ENCODE measurements at regions of chr14 and their contacts with region 1.

Region 1: GRCh38 chr14:106605548-106606448 is 1079.4 kb downstream of the TMEM121 start:
- H3K4me3 ChIP-seq: no peak overlapping the region
- H3K27ac ChIP-seq: no peak overlapping the region
- H3K4me1 ChIP-seq: no peaks in the 10 kb centered on the region
- CTCF ChIP-seq: no peak

Region 2: GRCh38 chr14:105690692-105691091 is 915.1 kb before region 1 on chr14:
- CTCF ChIA-PET with region 1: no interaction called
- POLR2A ChIA-PET with region 1: no interaction called
- H3K4me3 ChIP-seq: no peak overlapping the region
- H3K27ac ChIP-seq: no peak overlapping the region
- H3K4me1 ChIP-seq: no peaks in the 10 kb centered on the region
- CTCF ChIP-seq: no peak

Region 3: GRCh38 chr14:106622200-106622745 is 16.5 kb after region 1 on chr14:
- CTCF ChIA-PET with region 1: interaction called, 23 read pairs
- POLR2A ChIA-PET with region 1: no interaction called
- H3K4me3 ChIP-seq: no peak overlapping the region
- H3K27ac ChIP-seq: no peak overlapping the region
- H3K4me1 ChIP-seq: no peaks in the 10 kb centered on the region
- CTCF ChIP-seq: no peak

Region 4: DNA sequence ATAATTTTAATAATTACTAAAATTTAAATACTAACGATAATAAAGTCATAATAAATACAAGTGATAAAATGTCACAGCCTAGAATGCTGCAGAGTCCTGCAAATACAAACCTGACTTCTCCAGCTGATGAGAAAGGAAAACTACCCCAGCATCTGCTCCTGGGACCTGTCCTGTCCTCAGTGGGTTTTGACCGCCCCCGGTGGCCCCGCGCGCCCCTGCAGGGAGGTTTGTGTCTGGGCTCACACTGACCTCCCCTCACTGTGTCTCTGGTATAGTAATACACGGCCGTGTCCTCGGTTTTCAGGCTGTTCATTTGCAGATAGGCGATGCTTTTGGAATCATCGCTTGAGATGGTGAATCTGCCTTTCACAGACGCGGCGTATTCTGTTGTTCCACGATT is 60.0 kb after region 1 on chr14:
- CTCF ChIA-PET with region 1: interaction called, 11 read pairs
- POLR2A ChIA-PET with region 1: no interaction called
- H3K4me3 ChIP-seq: no peak overlapping the region
- H3K27ac ChIP-seq: no peak overlapping the region
- H3K4me1 ChIP-seq: no peaks in the 10 kb centered on the region
- CTCF ChIP-seq: no peak

Region 5: DNA sequence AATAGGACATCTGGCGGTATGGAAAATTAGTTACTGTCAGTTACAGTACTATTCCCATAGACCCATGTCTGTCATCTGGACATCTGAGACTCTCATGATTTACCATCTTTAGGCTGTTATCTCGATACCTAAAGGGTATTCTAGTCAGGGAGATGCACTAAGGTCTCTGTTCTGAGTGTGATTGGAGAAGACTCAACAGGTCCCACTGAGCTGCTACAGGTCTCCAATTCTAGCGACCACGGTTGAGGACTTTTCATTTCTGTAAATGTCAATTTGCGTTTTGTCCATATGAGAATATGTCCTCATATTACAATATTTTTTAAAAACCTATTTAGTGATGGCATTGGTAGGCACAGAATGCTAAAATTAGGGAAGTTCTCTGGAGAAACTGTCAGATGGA is 80.7 kb after region 1 on chr14:
- CTCF ChIA-PET with region 1: no interaction called
- POLR2A ChIA-PET with region 1: no interaction called
- H3K4me3 ChIP-seq: no peak overlapping the region
- H3K27ac ChIP-seq: no peak overlapping the region
- H3K4me1 ChIP-seq: no peaks in the 10 kb centered on the region
- CTCF ChIP-seq: no peak

Region 6: DNA sequence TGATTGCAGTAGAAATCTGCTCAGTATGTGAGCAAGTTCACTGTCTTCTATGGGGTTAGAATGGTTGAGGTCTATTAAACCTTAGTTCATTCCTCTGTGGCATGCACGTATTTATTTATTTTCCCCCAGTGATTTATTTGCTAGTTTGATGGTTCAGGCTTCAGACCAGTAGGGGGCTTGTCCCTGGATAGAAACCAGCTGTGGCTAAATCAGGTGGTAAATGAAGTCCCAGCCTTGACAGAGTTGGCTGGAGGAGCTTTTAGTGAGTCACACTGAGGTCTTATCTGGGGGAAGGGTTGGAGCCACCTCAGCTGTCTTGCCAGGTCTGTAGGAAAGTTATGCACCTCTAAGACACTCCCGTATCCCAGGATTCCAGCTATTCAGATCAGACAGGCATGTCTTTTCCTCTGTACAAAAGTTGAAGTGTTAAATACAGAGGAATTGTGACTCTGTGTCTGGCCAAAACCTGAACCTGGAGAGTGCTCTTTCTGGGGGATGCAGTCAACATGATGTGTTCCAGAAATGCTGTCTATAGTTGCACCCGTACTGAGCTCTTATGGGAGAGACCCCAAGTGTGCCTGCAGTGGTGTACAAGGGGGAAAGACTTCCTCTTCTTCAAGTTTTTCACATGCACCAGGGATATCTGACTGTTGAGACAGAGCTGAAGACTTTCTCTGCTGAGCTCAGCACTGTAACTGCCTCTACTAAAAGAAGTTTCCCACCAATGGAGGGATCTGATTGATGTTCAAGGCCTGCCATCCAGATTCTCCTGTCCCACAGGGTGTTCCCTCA is 242.7 kb after region 1 on chr14:
- CTCF ChIA-PET with region 1: no interaction called
- POLR2A ChIA-PET with region 1: no interaction called
- H3K4me3 ChIP-seq: no peak overlapping the region
- H3K27ac ChIP-seq: peak overlapping the region; percentile 18; the same call in 1 of the 2 replicates
- H3K4me1 ChIP-seq: peaks cover 22% of the 10 kb centered on the region
- CTCF ChIP-seq: peak; percentile 64

Region 7: GRCh38 chr14:106872611-106873446 is 267.0 kb after region 1 on chr14:
- CTCF ChIA-PET with region 1: no interaction called
- POLR2A ChIA-PET with region 1: no interaction called
- H3K4me3 ChIP-seq: no peak overlapping the region
- H3K27ac ChIP-seq: no peak overlapping the region
- H3K4me1 ChIP-seq: 0 out of 2 replicates have a peak, but pooled peaks cover 4% of the 10 kb centered on the region
- CTCF ChIP-seq: peak; percentile 86

Measured in HEK293 (cell line).